Activated CD4-positive, alpha-beta T cell treated with anti-CD3 and anti-CD28 coated beads for 36 hours (primary cell): ENCODE measurements at regions of chr9 and their contacts with region 1.

Region 1: DNA sequence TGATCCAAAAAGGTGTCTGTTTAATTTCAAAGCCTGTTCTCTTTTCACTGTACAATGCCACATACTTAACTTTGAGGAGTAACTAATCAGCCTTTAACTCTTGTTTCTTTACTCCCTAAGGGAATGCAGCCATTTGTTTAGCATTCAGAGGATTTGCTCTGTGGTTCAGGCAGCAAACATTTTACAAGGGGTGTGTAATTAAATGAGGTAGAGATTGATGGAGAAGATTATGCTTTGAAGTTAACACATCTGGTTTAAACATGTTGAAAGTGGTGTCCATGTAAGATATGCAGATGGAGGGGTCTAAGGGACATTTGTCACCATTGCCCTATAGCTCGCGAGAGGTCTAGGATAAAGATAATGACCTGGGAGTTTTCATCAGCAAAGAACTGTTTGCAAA is 41.9 kb downstream of the TMEM215 start:
- DNase-seq: no peak
- ATAC-seq: no peak
- H3K4me3 Mint-ChIP-seq: no peak overlapping the region
- H3K27ac Mint-ChIP-seq: no peak overlapping the region
- H3K4me1 Mint-ChIP-seq: no peaks in the 10 kb centered on the region
- H3K27me3 Mint-ChIP-seq: peaks cover 27% of the 10 kb centered on the region

Region 2: GRCh38 chr9:32811246-32811645 is 14.0 kb before region 1 on chr9:
- CTCF ChIA-PET with region 1: interaction called, 3 read pairs
- POLR2A ChIA-PET with region 1: no interaction called
- intact Hi-C with region 1: loop called in 1 of 2 experiments (anchors 2 kb)
- DNase-seq: no peak
- ATAC-seq: no peak
- H3K4me3 Mint-ChIP-seq: no peak overlapping the region
- H3K27ac Mint-ChIP-seq: no peak overlapping the region
- H3K4me1 Mint-ChIP-seq: no peaks in the 10 kb centered on the region
- H3K27me3 Mint-ChIP-seq: peaks cover 7% of the 10 kb centered on the region